Activated T-helper 2 cell treated with anti-CD3 and anti-CD28 coated beads, Interferon-gamma antibody, Interleukin-2, Interleukin-4, amounts not matched to agents 10 μg/mL and 5 μg/mL and 100 μg/mL, durations not matched to agents 14 hours and 24 hours and 36 hours (primary cell): ENCODE measurements at regions of chr2 and their contacts with region 1.

Region 1: GRCh38 chr2:73085691-73086360 is 14.3 kb upstream of the SFXN5 start:
- DNase-seq: peak; percentile 72
- H3K4me3 Mint-ChIP-seq: no peak overlapping the region
- H3K27ac Mint-ChIP-seq: no peak overlapping the region
- H3K4me1 Mint-ChIP-seq: peaks cover 2% of the 10 kb centered on the region
- H3K27me3 Mint-ChIP-seq: no peaks in the 10 kb centered on the region

Region 2: GRCh38 chr2:72887754-72888437 is 197.9 kb before region 1 on chr2:
- intact Hi-C with region 1: loop called (anchors 5 kb)
- DNase-seq: peak; percentile 36
- H3K4me3 Mint-ChIP-seq: peak overlapping the region; percentile 77
- H3K27ac Mint-ChIP-seq: no peak overlapping the region
- H3K4me1 Mint-ChIP-seq: peaks cover 1% of the 10 kb centered on the region
- H3K27me3 Mint-ChIP-seq: peaks cover 24% of the 10 kb centered on the region

Region 3: GRCh38 chr2:73156539-73157124 is 70.8 kb after region 1 on chr2:
- intact Hi-C with region 1: loop called (anchors 1 kb)
- DNase-seq: no peak
- H3K4me3 Mint-ChIP-seq: no peak overlapping the region
- H3K27ac Mint-ChIP-seq: no peak overlapping the region
- H3K4me1 Mint-ChIP-seq: no peaks in the 10 kb centered on the region
- H3K27me3 Mint-ChIP-seq: peaks cover 33% of the 10 kb centered on the region

Region 4: GRCh38 chr2:73516033-73516432 is 430.2 kb after region 1 on chr2:
- intact Hi-C with region 1: no loop called
- DNase-seq: no peak
- H3K4me3 Mint-ChIP-seq: no peak overlapping the region
- H3K27ac Mint-ChIP-seq: no peak overlapping the region
- H3K4me1 Mint-ChIP-seq: no peaks in the 10 kb centered on the region
- H3K27me3 Mint-ChIP-seq: no peaks in the 10 kb centered on the region